GM12878 (cell line): ENCODE measurements at regions of chr12 and their contacts with region 1.

Region 1: DNA sequence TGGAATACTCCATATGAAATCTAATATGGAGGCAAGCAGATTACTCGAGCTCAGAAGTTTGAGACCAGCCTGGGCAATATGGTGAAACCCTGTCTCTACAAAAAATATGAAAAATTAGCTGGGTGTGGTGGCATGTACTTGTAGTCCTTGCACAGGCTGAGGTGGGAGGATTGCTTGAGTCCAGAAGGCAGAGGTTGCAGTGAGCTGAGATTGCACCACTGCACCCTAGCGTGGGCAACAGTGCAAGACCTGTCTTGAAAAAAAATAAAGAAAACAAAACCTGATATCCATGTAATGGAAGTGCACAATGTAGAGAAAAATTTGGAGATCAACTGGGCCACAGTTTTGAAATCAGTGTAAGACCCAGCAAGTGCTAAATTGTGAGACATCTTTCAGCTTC is 17.4 kb downstream of the C12orf56 start:
- DNase-seq: no peak
- ATAC-seq: no peak
- H3K4me3 ChIP-seq: no peak overlapping the region
- H3K27ac ChIP-seq: no peak overlapping the region
- H3K4me1 ChIP-seq: no peaks in the 10 kb centered on the region
- H3K27me3 ChIP-seq: no peaks in the 10 kb centered on the region
- CTCF ChIP-seq: no peak
- EP300 ChIP-seq: no peak
- POLR2A ChIP-seq: no peak
- RAD21 ChIP-seq: no peak

Region 2: DNA sequence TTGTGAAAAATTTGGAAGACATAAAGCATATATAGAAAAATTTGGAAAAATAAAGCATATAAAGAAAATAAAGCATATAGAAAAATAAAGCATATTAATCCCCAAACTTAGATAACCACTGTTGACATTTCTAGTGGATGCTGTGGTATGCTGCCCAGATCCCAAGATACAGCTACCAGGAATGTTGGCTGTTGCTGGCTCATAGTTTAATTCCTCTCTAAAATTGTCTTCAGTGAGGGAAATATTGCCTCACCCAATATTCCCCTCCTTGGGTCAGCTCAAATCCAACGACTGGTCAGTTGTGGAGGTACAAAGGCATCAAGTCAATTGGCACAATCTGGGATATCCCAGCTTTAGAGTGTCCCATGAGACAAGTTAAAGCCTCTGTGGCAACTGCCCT is 141.0 kb before region 1 on chr12:
- CTCF ChIA-PET with region 1: no interaction called
- POLR2A ChIA-PET with region 1: no interaction called
- RAD21 ChIA-PET with region 1: no interaction called
- SMC1A ChIA-PET with region 1: no interaction called
- in situ Hi-C with region 1: no loop called
- intact Hi-C with region 1: no loop called
- DNase-seq: no peak
- ATAC-seq: no peak
- H3K4me3 ChIP-seq: no peak overlapping the region
- H3K27ac ChIP-seq: no peak overlapping the region
- H3K4me1 ChIP-seq: no peaks in the 10 kb centered on the region
- H3K27me3 ChIP-seq: 0 out of 4 replicates have a peak, but pooled peaks cover 0 to 5% of the 10 kb centered on the region in 2 experiments
- CTCF ChIP-seq: no peak
- EP300 ChIP-seq: no peak
- POLR2A ChIP-seq: no peak
- RAD21 ChIP-seq: no peak

Region 3: DNA sequence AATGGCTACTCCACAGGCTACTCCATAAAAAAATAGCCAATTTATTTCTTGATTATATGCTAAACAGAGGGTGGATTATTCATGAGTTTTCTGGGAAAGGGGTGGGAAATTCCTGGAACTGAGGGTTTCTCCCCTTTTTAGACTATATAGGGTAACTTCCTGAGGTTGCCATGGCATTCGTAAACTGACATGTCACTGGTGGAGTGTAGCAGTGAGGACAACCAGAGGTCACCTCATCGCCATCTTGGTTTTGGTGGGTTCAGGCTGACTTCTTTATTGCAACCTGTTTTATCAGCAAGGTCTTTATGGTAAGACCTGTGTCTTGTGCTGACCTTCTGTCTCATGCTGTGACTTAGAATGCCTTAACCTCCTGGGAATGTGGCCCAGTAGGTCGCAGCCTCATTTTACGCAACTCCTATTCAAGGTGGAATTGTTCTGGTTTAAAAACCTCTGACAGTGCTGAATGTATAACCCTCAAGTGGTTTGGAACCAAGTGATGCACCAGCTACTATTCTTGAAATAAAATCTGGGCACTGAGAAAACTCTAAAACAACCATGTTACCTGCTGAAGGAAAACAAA is 10.4 kb before region 1 on chr12:
- CTCF ChIA-PET with region 1: no interaction called
- POLR2A ChIA-PET with region 1: no interaction called
- RAD21 ChIA-PET with region 1: no interaction called
- SMC1A ChIA-PET with region 1: no interaction called
- in situ Hi-C with region 1: no loop called
- intact Hi-C with region 1: loop called (anchors 1 kb)
- DNase-seq: no peak
- ATAC-seq: no peak
- H3K4me3 ChIP-seq: no peak overlapping the region
- H3K27ac ChIP-seq: no peak overlapping the region
- H3K4me1 ChIP-seq: no peaks in the 10 kb centered on the region
- H3K27me3 ChIP-seq: no peaks in the 10 kb centered on the region
- CTCF ChIP-seq: no peak
- EP300 ChIP-seq: no peak
- POLR2A ChIP-seq: no peak
- RAD21 ChIP-seq: no peak